GM10248 (cell line): ENCODE measurements at regions of chr14 and their contacts with region 1.

Region 1: GRCh38 chr14:89258728-89259273 is 158.2 kb downstream of the FOXN3 start:
- DNase-seq: peak; percentile 31
- CTCF ChIP-seq: no peak

Region 2: DNA sequence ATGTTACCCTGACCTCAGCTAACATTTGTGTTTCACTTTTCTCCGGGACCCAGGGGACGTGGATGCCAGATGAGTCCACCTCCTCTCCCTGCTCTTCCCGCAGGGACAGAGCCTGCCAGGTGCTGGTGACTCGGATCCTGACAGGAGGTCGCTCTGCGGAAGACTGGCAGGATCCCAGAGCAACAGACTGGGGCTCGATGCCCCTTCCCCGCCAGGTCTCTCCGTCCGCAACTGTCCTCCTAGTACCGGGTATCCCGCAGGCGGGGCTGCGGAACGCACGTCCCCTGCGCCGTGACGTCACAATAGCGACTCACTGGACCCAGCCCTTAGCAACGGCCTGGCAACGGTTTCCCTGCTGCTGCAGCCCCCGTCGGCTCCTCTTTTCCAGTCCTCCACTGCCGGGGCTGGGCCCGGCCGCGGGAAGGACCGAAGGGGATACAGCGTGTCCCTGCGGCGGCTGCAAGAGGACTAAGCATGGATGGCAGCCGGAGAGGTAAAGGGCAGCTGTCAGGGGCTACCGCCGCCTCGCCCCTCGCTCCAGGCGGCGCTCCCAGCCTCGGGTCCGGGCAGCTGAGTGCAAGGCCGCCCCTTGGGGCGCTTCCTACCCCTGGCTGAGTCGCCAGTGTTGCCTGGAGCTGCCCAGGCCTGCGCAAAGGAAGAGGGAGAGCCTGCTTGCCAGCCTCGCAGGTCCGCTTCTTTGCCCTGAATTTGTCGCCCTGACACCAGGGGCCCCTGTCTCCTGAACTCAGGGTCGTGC is 873.3 kb before region 1 on chr14 and contains the start of gene SPATA7:
- CTCF ChIA-PET with region 1: no interaction called
- POLR2A ChIA-PET with region 1: no interaction called
- DNase-seq: peak; percentile 89
- CTCF ChIP-seq: no peak

Region 3: DNA sequence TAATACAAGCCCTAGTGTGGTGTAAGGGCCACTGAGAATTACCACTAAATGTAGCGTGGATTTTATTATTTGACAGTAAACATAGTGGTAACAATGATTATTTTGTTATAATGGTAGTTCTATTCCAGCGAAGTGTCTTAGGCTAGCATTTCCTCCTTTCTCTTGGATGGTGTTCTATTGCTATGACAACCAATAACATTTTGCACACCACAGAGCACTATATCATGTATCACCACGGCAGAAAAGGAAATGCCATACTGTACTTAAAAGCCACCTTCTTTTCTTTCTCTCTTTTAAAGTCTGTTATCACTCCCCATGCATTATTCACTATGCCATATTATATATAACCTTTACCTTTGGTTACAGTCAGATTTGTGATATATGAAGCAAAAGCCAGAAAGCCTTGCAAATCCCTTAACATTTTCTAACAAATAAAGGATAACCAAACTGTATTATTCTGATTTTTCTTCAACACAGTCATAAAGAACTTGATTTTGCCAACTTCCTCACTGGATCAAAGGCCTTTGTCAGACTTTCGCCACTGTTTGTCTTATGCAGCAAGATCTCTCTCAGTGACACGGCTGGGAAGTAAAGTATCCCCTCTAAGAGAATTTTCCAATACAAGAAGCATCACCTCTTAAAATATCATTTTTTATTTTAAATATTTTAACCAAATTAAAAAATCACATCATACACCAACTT is 37.5 kb before region 1 on chr14:
- CTCF ChIA-PET with region 1: no interaction called
- POLR2A ChIA-PET with region 1: no interaction called
- DNase-seq: no peak
- CTCF ChIP-seq: no peak

Region 4: GRCh38 chr14:89245802-89246201 is 13.0 kb before region 1 on chr14:
- CTCF ChIA-PET with region 1: interaction called, 13 read pairs
- POLR2A ChIA-PET with region 1: no interaction called
- DNase-seq: no peak
- CTCF ChIP-seq: no peak